Ascending aorta (tissue), 2 donors: ENCODE measurements at regions of chr1 and their contacts with region 1.

Region 1: GRCh38 chr1:3114846-3115245 is 45.8 kb downstream of the PRDM16 start:
- DNase-seq: peak in 1 of 2 donors; percentile 68
- H3K4me3 ChIP-seq: no peak overlapping the region
- H3K27ac ChIP-seq: peak overlapping the region; percentile 75 to 80
- H3K4me1 ChIP-seq: peaks cover 46 to 87% of the 10 kb centered on the region in 2 donors
- H3K27me3 ChIP-seq: no peaks in the 10 kb centered on the region
- CTCF ChIP-seq: no peak

Region 2: DNA sequence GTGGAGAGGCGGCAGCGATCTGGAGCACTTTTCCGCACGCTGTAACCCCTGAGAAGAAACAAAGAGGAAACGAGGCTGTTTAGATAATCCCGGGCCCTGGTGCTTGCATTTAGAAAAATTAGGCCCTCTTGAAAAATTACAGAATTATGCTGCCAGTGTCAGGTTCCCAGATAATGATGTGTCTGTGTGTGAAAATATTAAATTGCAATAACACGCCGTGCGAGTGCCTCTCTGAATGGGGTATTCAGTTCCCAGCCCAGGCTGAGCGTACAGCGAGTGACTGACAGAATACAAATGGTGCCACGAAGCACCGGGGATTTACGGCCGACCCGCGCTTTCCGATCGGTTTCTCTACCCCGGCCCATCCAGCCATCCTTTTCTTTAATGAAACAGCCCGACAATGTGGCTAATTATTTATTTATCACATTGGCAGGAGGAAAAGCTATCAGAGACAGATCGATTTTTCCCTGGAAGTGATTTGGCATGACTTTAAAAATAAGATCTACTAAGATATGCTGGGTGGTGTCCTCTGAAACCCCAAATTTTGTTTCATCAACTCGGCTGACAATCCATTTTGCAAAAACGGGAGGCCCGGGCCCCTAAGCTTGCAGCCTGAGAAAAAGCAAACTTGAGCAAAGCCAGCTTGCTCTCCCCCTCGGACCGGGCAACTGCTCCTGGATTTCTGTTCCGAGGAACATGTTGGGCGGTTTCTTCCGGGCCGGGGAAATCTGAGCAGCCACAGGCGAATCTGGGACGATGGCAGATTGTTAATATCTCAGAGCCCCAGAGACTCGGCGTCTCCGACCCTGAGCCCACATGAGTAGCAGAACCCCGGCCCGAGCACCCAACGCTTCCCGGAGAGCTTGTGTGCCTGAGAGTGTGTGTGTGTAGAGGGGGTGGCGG is 34.5 kb before region 1 on chr1:
- intact Hi-C with region 1: loop called (anchors 2 kb)
- DNase-seq: no peak
- H3K4me3 ChIP-seq: peak overlapping the region in 1 of 2 donors; percentile 37
- H3K27ac ChIP-seq: peak overlapping the region; percentile 99 to 100
- H3K4me1 ChIP-seq: peaks cover 35 to 64% of the 10 kb centered on the region in 2 donors
- H3K27me3 ChIP-seq: no peaks in the 10 kb centered on the region
- CTCF ChIP-seq: no peak

Region 3: GRCh38 chr1:3145532-3146325 is 30.9 kb after region 1 on chr1:
- intact Hi-C with region 1: no loop called
- DNase-seq: no peak
- H3K4me3 ChIP-seq: no peak overlapping the region
- H3K27ac ChIP-seq: peak overlapping the region in 1 of 2 donors; percentile 11
- H3K4me1 ChIP-seq: peaks cover 7 to 34% of the 10 kb centered on the region in 2 donors
- H3K27me3 ChIP-seq: no peaks in the 10 kb centered on the region
- CTCF ChIP-seq: no peak